ENCODE measurements at regions of chr6 and their contacts with region 1.

Region 1: DNA sequence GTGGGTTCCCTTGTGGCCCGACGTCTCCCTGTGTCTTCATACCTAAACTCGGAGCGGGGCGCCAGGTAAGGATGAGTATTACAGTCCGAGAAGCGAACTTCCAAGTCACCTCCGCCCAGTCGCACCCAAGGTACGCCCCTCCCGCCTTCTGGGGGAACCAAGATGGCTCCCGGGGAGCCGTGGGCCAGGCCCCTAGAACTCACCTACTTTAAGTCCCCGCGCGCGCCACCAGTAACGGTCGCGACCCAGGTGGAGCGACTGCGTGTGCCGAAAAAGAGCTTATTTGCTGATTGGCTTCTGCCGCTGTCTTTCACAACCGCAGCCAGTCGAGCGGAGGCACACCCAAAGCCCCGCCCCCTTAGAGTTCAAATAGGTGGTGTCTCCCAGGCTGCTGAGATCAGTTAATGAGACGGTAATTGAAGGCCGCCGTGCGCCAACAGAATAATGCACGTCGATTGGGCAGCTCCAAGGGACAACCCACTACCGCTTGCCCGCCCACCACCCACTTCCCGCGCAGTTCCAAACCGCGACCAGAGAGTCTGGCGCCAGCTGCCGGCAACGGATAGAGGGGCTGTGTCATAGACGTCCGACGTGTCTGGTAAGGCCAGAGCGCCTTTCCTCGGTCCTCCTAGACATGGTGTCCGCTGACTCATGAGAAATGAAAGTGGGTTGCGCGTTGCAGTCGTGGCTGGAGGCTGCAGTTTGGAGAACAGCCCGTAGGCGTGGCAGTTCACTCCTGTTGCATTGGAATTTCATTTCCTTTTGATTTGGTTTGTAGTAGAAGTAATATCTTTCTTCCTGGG is at the start of gene MDC1:
- DNase-seq: peak; percentile 99
- H3K4me3 Mint-ChIP-seq: peak within 1 kb of the TSS; percentile 95
- H3K27ac Mint-ChIP-seq: peak within 1 kb of the TSS; percentile 95
- H3K4me1 Mint-ChIP-seq: peaks cover 38% of the 10 kb centered on the region
- H3K27me3 Mint-ChIP-seq: no peaks in the 10 kb centered on the region
- CTCF ChIP-seq: no peak
- total RNA-seq, gene MDC1: 62.4 and 66.6 TPM in 2 replicates

Region 2: DNA sequence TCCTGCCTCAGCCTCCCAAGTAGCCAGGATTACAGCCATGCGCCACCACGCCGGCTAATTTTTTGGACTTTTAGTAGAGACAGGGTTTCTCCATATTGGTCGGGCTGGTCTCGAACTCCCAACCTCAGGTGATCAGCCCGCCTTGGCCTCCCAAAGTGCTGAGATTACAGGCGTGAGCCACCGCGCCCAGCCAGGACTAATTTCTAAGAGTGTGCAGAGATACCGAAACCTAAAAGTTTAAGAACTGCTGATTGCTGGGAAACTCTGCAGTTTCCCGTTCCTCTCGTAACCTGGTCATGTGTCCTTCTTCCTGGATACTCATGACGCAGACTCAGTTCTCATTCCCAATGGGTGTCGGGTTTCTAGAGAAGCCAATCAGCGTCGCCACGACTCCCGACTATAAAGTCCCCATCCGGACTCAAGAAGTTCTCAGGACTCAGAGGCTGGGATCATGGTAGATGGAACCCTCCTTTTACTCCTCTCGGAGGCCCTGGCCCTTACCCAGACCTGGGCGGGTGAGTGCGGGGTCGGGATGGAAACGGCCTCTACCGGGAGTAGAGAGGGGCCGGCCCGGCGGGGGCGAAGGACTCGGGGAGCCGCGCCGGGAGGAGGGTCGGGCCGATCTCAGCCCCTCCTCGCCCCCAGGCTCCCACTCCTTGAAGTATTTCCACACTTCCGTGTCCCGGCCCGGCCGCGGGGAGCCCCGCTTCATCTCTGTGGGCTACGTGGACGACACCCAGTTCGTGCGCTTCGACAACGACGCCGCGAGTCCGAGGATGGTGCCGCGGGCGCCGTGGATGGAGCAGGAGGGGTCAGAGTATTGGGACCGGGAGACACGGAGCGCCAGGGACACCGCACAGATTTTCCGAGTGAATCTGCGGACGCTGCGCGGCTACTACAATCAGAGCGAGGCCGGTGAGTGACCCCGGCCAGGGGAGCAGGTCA is 227.9 kb before region 1 on chr6 and contains the start of gene HLA-E:
- CTCF ChIA-PET with region 1: no interaction called
- intact Hi-C with region 1: loop called (anchors 10 kb)
- DNase-seq: peak; percentile 93
- H3K4me3 Mint-ChIP-seq: peak within 1 kb of the TSS; percentile 84
- H3K27ac Mint-ChIP-seq: peak within 1 kb of the TSS; percentile 97
- H3K4me1 Mint-ChIP-seq: peaks cover 8% of the 10 kb centered on the region
- H3K27me3 Mint-ChIP-seq: peaks cover 13% of the 10 kb centered on the region
- CTCF ChIP-seq: no peak
- total RNA-seq, gene HLA-E: 161 and 230 TPM in 2 replicates

Region 3: GRCh38 chr6:30616811-30617564 is 100.3 kb before region 1 on chr6 and contains the start of gene PPP1R10:
- CTCF ChIA-PET with region 1: no interaction called
- intact Hi-C with region 1: loop called (anchors 5 kb)
- DNase-seq: peak; percentile 99
- H3K4me3 Mint-ChIP-seq: peak within 1 kb of the TSS; percentile 70
- H3K27ac Mint-ChIP-seq: peak within 1 kb of the TSS; percentile 98
- H3K4me1 Mint-ChIP-seq: peaks cover 48% of the 10 kb centered on the region
- H3K27me3 Mint-ChIP-seq: peaks cover 16% of the 10 kb centered on the region
- CTCF ChIP-seq: no peak
- total RNA-seq, gene PPP1R10: 119 and 134 TPM in 2 replicates

Region 4: DNA sequence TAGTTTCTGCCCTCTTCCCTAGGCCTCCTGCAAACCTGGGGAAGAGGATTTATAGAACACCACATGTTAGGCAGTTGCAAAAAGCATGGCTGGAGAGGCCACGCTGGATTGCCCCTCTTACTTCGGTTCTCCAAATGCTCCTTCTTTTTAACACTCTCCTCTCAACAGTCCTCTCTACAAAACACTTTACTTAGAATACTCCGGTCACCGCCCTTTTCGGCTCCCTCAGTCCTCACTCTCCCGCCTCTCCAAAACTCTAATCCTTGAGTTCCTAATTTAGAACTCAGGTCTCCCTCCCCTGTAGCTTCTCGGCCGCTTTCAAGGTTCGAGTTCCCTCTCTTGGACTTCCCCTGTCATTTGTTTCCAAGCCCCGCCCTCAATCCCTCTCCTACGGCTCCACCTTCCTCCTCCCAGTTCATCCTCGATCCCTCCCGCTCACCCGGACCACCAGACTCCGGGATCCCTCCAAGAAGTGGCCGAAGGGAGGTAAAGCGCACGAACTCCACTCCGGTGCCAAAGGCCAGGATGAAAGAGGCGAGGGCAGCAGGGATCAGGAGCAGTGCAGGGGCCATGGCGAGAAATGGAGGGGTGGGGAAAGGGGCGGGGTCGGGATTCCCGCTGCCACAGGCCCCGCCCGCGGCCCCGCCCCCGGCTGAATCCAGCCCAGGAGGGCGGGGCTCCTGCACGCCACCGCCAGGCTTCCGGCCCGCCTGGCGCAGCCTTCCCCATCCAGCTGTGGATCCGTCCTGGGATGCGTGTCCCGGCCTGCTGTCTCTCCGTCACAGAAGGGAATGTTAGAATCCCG is 26.6 kb before region 1 on chr6 and contains the start of gene NRM:
- CTCF ChIA-PET with region 1: interaction called, 14 read pairs
- intact Hi-C with region 1: loop called (anchors 1 kb)
- DNase-seq: peak; percentile 93
- H3K4me3 Mint-ChIP-seq: peak within 1 kb of the TSS; percentile 74
- H3K27ac Mint-ChIP-seq: peak within 1 kb of the TSS; percentile 38
- H3K4me1 Mint-ChIP-seq: peaks cover 67% of the 10 kb centered on the region
- H3K27me3 Mint-ChIP-seq: no peaks in the 10 kb centered on the region
- CTCF ChIP-seq: no peak
- total RNA-seq, gene NRM: 22.8 and 30.2 TPM in 2 replicates

Region 5: DNA sequence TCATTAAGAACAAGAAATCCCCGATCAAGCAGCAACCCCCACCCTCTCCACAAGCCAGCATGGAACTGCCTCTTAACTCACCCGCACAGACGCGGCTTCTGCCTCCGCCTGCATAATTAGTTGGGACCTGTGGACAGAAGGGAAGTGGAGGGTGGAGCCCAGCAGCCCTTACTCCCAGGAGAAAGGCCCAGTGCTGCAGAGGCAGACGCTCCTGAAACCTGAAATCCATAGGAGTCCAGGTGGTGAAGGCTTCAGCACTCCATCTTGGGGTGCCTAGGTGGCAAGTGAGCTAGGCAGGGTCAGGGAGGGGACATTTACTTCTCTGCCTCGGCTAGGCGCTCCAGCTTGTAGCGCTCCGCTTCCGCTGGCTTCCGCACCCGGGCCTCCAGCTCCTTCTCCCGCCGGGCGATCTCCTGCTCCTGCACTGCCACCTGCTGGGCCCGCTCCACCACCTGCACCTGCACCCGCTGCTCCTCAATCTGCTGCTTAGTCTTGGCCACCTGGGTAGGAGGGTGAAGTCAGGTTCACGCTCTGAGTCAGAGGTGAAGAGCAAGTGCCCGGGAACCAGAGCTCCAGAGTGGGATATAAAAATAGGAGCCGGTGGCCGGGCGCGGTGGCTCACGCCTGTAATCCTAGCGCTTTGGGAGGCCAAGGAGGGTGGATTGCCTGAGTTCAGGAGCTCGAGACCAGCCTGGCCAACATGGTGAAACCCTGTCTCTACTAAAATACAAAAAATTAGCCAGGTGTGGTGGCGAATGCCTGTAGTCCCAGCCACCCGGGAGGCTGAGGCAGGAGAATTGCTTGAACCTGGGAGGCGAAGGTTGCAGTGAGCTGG is 13.6 kb after region 1 on chr6:
- CTCF ChIA-PET with region 1: interaction called, 14 read pairs
- intact Hi-C with region 1: no loop called
- DNase-seq: peak; percentile 95
- H3K4me3 Mint-ChIP-seq: peak overlapping the region; percentile 66
- H3K27ac Mint-ChIP-seq: peak overlapping the region; percentile 98
- H3K4me1 Mint-ChIP-seq: peaks cover 22% of the 10 kb centered on the region
- H3K27me3 Mint-ChIP-seq: no peaks in the 10 kb centered on the region
- CTCF ChIP-seq: peak; percentile 84

Region 6: GRCh38 chr6:31094389-31094881 is 377.2 kb after region 1 on chr6:
- CTCF ChIA-PET with region 1: no interaction called
- intact Hi-C with region 1: no loop called
- DNase-seq: peak; percentile 53
- H3K4me3 Mint-ChIP-seq: no peak overlapping the region
- H3K27ac Mint-ChIP-seq: no peak overlapping the region
- H3K4me1 Mint-ChIP-seq: peaks cover 36% of the 10 kb centered on the region
- H3K27me3 Mint-ChIP-seq: no peaks in the 10 kb centered on the region
- CTCF ChIP-seq: no peak

Measured in Calu3 (cell line).